AG04450 (cell line): ENCODE measurements at regions of chr2 and their contacts with region 1.

Region 1: DNA sequence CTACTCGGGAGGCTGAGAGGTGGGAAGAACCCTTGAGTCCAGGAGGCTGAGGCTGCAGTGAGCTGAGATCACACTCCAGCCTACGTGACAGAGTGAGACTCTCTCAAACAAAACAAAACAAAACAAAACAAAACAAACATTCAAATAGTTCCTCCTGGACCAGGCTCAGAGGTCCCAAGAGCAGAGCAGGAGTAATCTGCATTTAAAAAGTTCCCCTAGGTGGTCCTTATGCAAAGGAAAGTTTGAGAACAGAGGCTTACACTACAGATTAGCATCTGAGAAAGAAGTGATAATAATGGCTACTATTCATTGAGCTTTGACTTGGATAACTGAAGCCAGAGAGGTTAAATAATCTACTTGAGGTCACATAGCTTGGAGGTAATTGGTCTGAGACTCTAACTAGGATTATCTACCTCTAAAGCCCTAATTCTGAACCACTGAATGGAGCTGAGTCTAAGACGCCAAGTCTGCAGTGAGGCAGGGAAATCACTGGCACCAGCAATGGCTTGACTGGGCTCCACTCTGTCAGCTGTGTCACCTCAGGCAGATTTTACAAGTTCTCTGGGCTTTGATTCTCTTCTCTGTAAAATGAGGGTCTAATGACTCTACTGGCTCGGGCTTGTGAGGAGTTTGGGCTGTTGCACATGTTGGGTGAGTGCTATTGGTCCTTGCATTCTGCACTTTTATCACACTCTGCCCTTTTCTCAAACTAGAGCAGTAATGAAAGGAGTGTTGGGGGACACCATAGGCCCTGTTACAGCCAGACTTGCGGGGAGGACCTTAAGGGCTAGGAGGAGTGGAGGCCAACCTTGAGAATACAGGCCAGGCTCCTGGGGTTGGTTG is 29.2 kb upstream of the DLX2 start:
- DNase-seq: no peak
- H3K4me3 ChIP-seq: no peak overlapping the region
- H3K27ac ChIP-seq: no peak overlapping the region
- H3K27me3 ChIP-seq: peaks cover 3% of the 10 kb centered on the region
- CTCF ChIP-seq: no peak

Region 2: GRCh38 chr2:171574149-171574795 is 557.7 kb before region 1 on chr2:
- CTCF ChIA-PET with region 1: interaction called, 18 read pairs
- POLR2A ChIA-PET with region 1: no interaction called
- DNase-seq: peak; percentile 15
- H3K4me3 ChIP-seq: no peak overlapping the region
- H3K27ac ChIP-seq: no peak overlapping the region
- H3K27me3 ChIP-seq: peaks cover 4% of the 10 kb centered on the region
- CTCF ChIP-seq: peak; percentile 95

Region 3: DNA sequence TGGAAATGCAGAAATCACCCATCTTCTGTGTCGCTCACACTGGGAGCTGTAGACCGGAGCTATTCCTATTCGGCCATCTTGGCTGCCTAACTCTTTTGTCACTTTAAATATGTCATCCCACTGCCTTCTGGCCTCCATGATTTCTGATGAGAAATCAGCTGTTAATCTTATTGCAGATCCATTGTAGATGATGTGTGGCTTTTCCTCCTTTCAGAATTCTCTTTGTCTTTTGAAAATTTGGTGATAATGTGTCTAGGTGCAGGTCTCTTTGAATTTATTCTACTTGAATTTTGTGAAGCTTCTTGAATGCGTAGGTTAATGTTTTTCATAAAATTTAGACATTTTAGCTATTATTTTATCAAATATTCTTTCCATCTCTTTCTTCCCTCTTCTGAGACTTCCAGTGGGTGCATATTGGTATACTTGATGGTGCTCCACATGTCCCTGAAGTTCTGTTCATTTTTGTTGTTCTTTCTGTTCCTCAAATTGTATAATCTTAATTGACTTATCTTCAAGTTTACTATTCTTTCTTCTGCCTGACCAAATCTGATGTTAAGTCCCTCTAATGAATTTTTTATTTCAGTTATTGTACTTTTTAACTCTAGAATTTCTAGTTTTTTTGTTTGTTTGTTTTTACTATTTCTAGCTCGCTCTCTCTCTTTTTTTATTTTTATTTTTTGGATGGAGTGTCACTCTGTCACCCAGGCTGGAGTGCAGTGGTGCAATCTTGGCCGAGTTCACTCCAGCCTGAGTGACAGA is 61.6 kb after region 1 on chr2:
- CTCF ChIA-PET with region 1: no interaction called
- POLR2A ChIA-PET with region 1: no interaction called
- DNase-seq: no peak
- H3K4me3 ChIP-seq: no peak overlapping the region
- H3K27ac ChIP-seq: no peak overlapping the region
- H3K27me3 ChIP-seq: no peaks in the 10 kb centered on the region
- CTCF ChIP-seq: no peak